OCI-LY7 (cell line): ENCODE measurements at regions of chr1 and their contacts with region 1.

Region 1: DNA sequence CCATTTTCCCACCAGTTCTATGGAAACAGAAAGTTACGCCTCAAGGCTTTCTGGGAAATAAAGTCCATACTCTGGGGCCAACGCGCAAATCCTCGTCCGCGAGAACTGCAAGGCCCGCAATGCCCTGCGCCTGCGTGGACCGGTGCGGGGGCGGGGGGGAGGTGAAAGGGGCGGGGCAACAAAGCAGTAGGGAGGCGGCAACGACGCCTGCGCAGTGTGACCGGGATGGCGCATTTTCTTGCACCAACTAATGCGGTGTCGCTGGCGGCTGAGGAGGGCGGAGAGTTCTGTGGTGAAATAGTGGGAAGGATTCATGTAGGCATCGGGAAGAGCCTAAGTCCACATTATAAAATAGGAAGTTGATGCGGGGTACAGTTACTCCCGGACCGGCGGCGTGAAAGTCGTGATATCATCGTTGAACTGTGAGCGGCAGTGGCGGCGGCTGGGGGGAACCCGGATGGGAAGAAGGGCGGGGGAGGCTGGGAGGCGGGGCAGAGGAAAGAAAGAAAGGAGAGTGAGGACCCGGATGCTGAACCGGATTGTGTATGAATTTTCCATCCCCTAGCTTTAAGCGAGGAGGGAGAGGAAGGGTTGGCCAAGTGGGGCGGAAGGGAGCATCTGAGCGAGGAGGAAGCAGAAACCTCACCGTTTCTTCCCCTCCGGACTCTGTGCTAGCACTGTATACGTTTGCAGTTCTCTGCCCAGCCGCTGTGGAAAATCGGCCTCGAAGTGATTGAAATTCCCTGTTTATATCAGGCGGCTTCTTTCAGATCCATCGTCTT is at the start of gene GGPS1:
- DNase-seq: peak; percentile 100
- H3K4me3 ChIP-seq: peak within 1 kb of the TSS; percentile 96
- H3K27ac ChIP-seq: peak within 1 kb of the TSS; percentile 91
- H3K4me1 ChIP-seq: peaks cover 44% of the 10 kb centered on the region
- CTCF ChIP-seq: no peak
- total RNA-seq, gene GGPS1: 8.0 and 21.9 TPM in 2 replicates

Region 2: GRCh38 chr1:235067263-235068172 is 261.0 kb before region 1 on chr1:
- CTCF ChIA-PET with region 1: no interaction called
- POLR2A ChIA-PET with region 1: no interaction called
- intact Hi-C with region 1: no loop called
- DNase-seq: no peak
- H3K4me3 ChIP-seq: no peak overlapping the region
- H3K27ac ChIP-seq: no peak overlapping the region
- H3K4me1 ChIP-seq: peaks cover 22% of the 10 kb centered on the region
- CTCF ChIP-seq: no peak

Region 3: DNA sequence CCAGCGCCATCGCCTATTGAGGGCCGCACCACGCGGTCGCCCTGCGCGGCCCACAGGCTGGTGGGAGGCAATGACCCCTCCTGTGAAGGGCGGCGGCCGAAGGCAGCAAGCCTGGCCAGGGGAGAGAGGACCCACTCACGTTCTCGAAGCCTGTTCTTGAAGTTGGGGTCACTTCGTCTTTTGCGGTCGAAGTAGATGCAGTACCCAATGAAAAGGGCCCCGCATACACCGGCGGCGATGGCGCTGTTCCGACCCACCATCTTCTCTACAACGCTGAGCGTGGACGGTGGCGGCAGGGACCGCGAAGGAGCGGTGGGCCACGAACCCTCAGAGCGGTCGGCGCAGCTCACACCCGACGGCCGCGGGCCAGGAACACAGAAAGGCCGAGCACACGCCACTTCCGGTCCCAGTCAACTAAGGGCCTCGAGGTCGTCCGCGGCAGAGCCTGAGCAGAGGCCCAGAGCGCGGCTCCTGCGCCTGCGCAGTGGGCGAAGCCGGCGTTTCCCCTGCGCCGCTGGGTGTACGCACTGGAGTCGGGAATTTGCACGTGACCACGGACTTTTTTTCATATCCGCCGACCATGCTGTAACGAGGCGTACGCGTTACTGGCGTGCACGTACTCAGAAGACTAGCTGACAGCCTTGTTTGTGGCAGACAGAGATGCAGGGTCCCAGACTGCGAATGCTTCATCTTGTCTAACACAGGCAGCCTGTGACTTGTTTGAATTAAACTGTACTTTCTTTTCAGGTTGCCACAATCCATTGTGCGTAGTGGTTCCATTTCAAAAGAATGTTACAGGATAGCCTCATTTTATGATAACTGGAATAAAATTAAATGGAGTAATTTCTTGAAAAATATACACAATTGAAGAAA is 199.9 kb before region 1 on chr1 and contains the start of gene TOMM20:
- CTCF ChIA-PET with region 1: no interaction called
- POLR2A ChIA-PET with region 1: no interaction called
- intact Hi-C with region 1: loop called (anchors 2 kb)
- DNase-seq: peak; percentile 99
- H3K4me3 ChIP-seq: peak within 1 kb of the TSS; percentile 97
- H3K27ac ChIP-seq: peak within 1 kb of the TSS; percentile 67
- H3K4me1 ChIP-seq: peaks cover 31% of the 10 kb centered on the region
- CTCF ChIP-seq: no peak; the same call in 1 of the 2 replicates
- total RNA-seq, gene TOMM20: 68.5 and 76.7 TPM in 2 replicates

Region 4: DNA sequence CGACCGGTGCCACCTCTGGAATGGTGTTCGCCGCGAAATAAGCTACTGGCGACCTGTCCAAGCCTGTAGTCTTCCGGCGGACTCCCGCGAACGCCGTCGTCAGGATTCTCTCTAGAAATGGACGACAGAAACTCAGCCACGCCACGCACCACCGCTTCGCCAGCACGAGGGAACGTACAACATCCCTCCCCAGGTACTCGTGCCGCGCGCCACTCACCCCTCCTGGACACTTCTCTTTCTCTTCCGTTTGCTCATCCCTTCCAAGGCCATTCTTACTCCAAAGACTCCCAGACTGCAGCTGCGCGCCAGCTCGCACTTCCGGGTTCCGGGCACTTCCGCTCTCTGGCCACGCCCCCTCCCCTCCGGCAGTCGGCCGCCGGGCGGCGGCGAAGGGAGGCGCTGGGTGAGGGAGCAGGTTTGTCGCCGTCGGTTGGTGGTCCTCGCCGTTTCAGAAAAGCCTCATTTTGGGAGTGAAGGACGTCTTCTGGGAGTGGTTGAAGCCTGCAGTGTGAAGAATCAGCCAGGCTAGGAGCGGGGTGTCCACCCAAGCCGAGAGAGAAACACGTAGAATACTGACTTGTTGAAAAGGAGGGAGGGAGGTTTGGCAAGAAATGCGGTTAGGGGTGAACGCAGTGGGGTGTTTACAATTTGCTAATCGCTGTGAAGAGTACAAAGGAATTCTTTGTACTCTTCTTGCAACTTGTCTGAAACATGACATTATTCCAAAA is 167.4 kb before region 1 on chr1 and contains the start of gene RBM34:
- CTCF ChIA-PET with region 1: no interaction called
- POLR2A ChIA-PET with region 1: no interaction called
- intact Hi-C with region 1: loop called (anchors 5 kb)
- DNase-seq: peak; percentile 92
- H3K4me3 ChIP-seq: peak within 1 kb of the TSS; percentile 85
- H3K27ac ChIP-seq: peak within 1 kb of the TSS; percentile 64
- H3K4me1 ChIP-seq: peaks cover 18% of the 10 kb centered on the region
- CTCF ChIP-seq: peak; percentile 38; the same call in 1 of the 2 replicates
- total RNA-seq, gene RBM34: 46.4 and 53.6 TPM in 2 replicates

Region 5: DNA sequence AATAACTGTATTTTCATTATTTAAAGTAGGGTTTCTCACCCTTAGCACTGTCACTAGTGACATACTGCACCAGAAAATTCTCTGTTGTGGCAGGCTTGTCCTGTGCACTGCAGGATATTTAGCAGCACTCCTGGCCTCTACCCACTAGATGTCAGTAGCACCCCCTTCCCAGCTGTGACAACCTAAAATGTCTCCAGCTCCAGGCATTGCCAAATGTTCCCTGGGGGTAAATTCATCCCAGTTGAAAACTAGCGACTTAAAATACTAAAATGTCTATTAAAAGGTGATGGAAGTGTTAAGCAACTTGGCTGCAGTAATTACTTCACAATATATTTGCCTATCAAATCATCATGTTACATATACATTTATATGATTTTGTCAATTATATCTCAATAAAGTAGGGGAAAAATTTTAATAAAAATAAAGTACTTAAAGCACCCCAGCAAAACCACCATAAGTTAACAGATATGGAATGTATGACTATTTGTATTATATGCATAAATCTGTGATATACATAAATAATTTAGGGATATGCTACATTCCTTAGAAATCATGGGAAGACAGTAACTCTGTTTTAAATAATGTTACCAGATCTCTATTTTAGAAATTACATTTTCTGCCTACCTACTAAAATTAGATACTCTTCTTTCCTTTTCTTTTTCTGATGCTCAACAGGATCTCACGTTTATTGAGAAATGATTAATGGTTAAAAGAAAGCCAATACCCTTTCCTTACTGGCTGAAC is 75.2 kb before region 1 on chr1:
- CTCF ChIA-PET with region 1: no interaction called
- POLR2A ChIA-PET with region 1: interaction called, 3 read pairs
- intact Hi-C with region 1: loop called (anchors 1 kb)
- DNase-seq: peak; percentile 75
- H3K4me3 ChIP-seq: no peak overlapping the region
- H3K27ac ChIP-seq: no peak overlapping the region
- H3K4me1 ChIP-seq: no peaks in the 10 kb centered on the region
- CTCF ChIP-seq: peak; percentile 99